ENCODE measurements at regions of chr3 and their contacts with region 1.

Region 1: GRCh38 chr3:37163262-37164015 is 10.9 kb downstream of the LRRFIP2 start:
- DNase-seq: no peak
- ATAC-seq: peak; percentile 68
- H3K4me3 ChIP-seq: no peak overlapping the region
- H3K27ac ChIP-seq: peak overlapping the region; percentile 59
- H3K4me1 ChIP-seq: peaks cover 14% of the 10 kb centered on the region
- H3K27me3 ChIP-seq: no peaks in the 10 kb centered on the region
- CTCF ChIP-seq: no peak
- EP300 ChIP-seq: no peak
- POLR2A ChIP-seq: no peak
- RAD21 ChIP-seq: no peak

Region 2: DNA sequence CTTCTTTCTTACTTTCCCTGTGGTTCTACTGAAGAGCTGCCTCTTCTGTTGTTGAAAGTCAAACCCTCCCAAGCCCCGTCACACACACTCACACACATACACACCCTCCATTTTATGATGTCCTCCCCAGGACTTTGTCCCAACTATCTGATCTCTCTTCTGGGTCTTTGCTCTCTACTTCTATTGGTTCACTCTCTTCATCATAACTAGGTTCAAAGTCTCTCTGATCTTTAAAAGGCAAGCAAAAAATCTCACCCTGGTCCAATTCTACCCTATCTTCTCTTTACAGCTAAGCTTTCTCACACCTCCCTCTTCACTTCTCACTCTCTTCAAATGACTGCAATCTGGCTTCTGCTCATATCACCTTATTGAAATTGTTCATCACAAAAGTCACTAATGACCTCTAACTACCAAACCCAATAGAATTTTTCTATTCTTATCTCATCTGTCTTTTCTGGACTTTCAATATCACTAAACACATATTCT is 23.8 kb before region 1 on chr3:
- CTCF ChIA-PET with region 1: interaction called, 4 read pairs
- POLR2A ChIA-PET with region 1: no interaction called
- RAD21 ChIA-PET with region 1: interaction called, 3 read pairs
- SMC1A ChIA-PET with region 1: interaction called, 16 read pairs
- in situ Hi-C with region 1: no loop called
- intact Hi-C with region 1: no loop called
- DNase-seq: no peak
- ATAC-seq: peak; percentile 84
- H3K4me3 ChIP-seq: no peak overlapping the region
- H3K27ac ChIP-seq: no peak overlapping the region
- H3K4me1 ChIP-seq: peaks cover 23% of the 10 kb centered on the region
- H3K27me3 ChIP-seq: no peaks in the 10 kb centered on the region
- CTCF ChIP-seq: no peak
- EP300 ChIP-seq: peak; percentile 23 to 40; a peak in 1 of 4 replicates
- POLR2A ChIP-seq: no peak
- RAD21 ChIP-seq: no peak

Region 3: GRCh38 chr3:37174532-37175126 is 11.2 kb after region 1 on chr3 and contains the start of gene LRRFIP2:
- CTCF ChIA-PET with region 1: interaction called, 12 read pairs
- POLR2A ChIA-PET with region 1: interaction called, 6 read pairs
- RAD21 ChIA-PET with region 1: interaction called, 3 read pairs
- SMC1A ChIA-PET with region 1: interaction called, 6 read pairs
- in situ Hi-C with region 1: no loop called
- intact Hi-C with region 1: no loop called
- DNase-seq: peak; percentile 51
- ATAC-seq: peak; percentile 52
- H3K4me3 ChIP-seq: peak within 1 kb of the TSS; percentile 66
- H3K27ac ChIP-seq: peak within 1 kb of the TSS; percentile 58
- H3K4me1 ChIP-seq: no peaks in the 10 kb centered on the region; the same call in 1 of the 2 replicates
- H3K27me3 ChIP-seq: no peaks in the 10 kb centered on the region
- CTCF ChIP-seq: no peak
- EP300 ChIP-seq: peak; percentile 43 to 69; a peak in 3 of 4 replicates
- POLR2A ChIP-seq: no peak
- RAD21 ChIP-seq: no peak
- polyA plus RNA-seq, gene LRRFIP2: 9.7 to 14.2 TPM